SK-N-SH (cell line): ENCODE measurements at regions of chr1 and their contacts with region 1.

Region 1: GRCh38 chr1:27284425-27285273 is 37.3 kb upstream of the TMEM222 start:
- DNase-seq: peak; percentile 84
- H3K4me3 ChIP-seq: no peak overlapping the region; a peak in 1 of 4 replicates
- H3K27ac ChIP-seq: no peak overlapping the region
- H3K4me1 ChIP-seq: no peaks in the 10 kb centered on the region
- H3K27me3 ChIP-seq: no peaks in the 10 kb centered on the region
- CTCF ChIP-seq: peak; percentile 90
- EP300 ChIP-seq: no peak
- RAD21 ChIP-seq: peak; percentile 80

Region 2: GRCh38 chr1:27097484-27097917 is 187.1 kb before region 1 on chr1:
- CTCF ChIA-PET with region 1: interaction called, 149 read pairs
- POLR2A ChIA-PET with region 1: no interaction called
- DNase-seq: peak; percentile 91
- H3K4me3 ChIP-seq: peak overlapping the region in 1 of 2 experiments; percentile 36; a peak in 1 of 4 replicates
- H3K27ac ChIP-seq: no peak overlapping the region
- H3K4me1 ChIP-seq: peaks cover 15 to 19% of the 10 kb centered on the region in 2 experiments; a peak in 3 of 4 replicates
- H3K27me3 ChIP-seq: no peaks in the 10 kb centered on the region
- CTCF ChIP-seq: peak; percentile 97
- EP300 ChIP-seq: no peak
- RAD21 ChIP-seq: peak; percentile 96

Region 3: GRCh38 chr1:27111626-27112573 is 172.7 kb before region 1 on chr1:
- CTCF ChIA-PET with region 1: interaction called, 10 read pairs
- POLR2A ChIA-PET with region 1: no interaction called
- DNase-seq: peak; percentile 63
- H3K4me3 ChIP-seq: no peak overlapping the region
- H3K27ac ChIP-seq: peak overlapping the region; percentile 34 to 83
- H3K4me1 ChIP-seq: peaks cover 9 to 17% of the 10 kb centered on the region in 2 experiments; a peak in 3 of 4 replicates
- H3K27me3 ChIP-seq: no peaks in the 10 kb centered on the region
- CTCF ChIP-seq: peak; percentile 54
- EP300 ChIP-seq: peak in 1 of 2 experiments; percentile 47; a peak in 1 of 4 replicates
- RAD21 ChIP-seq: peak; percentile 70

Region 4: DNA sequence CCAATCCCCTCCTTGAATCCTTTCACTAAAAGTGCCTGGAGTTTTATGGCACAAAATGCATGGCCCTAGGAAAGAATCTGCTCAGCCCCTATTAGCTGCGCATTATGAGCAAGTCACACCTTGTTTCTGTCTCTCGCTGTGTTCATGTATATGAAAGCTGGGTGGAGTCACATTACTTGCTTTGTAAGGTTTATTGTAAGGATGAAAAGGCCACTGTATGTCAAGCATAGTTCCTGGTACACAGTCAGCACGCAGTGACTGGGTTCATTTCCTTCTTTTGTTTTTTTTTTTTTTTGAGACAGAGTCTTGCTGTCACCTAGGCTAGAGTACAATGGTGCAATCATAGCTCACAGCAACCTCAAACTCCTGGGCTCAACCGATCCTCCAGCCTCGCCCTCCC is 123.1 kb before region 1 on chr1:
- CTCF ChIA-PET with region 1: no interaction called
- POLR2A ChIA-PET with region 1: no interaction called
- DNase-seq: peak; percentile 1
- H3K4me3 ChIP-seq: no peak overlapping the region
- H3K27ac ChIP-seq: no peak overlapping the region
- H3K4me1 ChIP-seq: 0 out of 4 replicates have a peak, but pooled peaks cover 0 to under 1% of the 10 kb centered on the region in 2 experiments
- H3K27me3 ChIP-seq: no peaks in the 10 kb centered on the region
- CTCF ChIP-seq: no peak
- EP300 ChIP-seq: no peak
- RAD21 ChIP-seq: no peak

Region 5: GRCh38 chr1:27192039-27192529 is 92.6 kb before region 1 on chr1:
- CTCF ChIA-PET with region 1: interaction called, 30 read pairs
- POLR2A ChIA-PET with region 1: no interaction called
- DNase-seq: no peak
- H3K4me3 ChIP-seq: no peak overlapping the region
- H3K27ac ChIP-seq: no peak overlapping the region
- H3K4me1 ChIP-seq: no peaks in the 10 kb centered on the region
- H3K27me3 ChIP-seq: no peaks in the 10 kb centered on the region
- CTCF ChIP-seq: no peak
- EP300 ChIP-seq: no peak
- RAD21 ChIP-seq: no peak

Region 6: DNA sequence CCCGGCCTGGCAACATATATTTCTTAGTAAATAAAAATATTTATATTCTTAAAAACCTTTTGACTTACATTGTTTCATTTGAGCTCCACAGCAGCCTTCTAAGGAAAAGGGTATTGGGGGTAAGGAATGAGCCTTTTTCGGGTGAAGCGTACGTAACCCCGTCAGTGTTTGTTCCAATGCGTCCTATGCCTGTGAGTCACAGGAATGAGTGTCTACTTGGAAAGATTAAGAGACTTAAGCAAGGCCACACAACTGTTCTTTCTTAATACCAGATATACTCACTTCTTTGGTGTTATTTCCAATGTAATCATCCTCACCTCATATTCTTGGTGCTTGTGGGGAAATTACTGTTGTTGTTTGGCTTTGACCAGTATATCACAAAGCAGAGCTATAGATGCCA is 27.5 kb before region 1 on chr1:
- CTCF ChIA-PET with region 1: interaction called, 11 read pairs
- POLR2A ChIA-PET with region 1: no interaction called
- DNase-seq: no peak
- H3K4me3 ChIP-seq: no peak overlapping the region
- H3K27ac ChIP-seq: no peak overlapping the region
- H3K4me1 ChIP-seq: no peaks in the 10 kb centered on the region
- H3K27me3 ChIP-seq: no peaks in the 10 kb centered on the region
- CTCF ChIP-seq: no peak
- EP300 ChIP-seq: no peak
- RAD21 ChIP-seq: no peak

Region 7: DNA sequence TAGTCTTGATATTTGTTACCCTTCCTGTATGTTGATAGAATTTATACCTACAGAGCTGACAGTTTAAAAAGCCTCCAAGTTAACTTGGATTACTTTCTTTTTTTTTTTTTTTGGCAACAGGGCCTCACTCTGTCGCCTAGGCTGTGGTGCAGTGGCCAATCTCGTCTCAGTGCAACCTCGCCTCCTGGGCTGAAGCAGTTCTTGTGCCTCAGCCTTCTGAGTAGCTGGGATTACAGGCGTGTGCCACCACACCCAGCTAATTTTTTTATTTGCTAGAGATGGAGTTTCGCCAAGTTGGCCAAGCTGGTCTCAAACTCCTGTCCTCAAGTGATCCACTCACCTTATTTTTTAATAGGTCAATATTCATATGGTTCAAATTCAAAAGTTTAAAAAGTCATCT is 17.5 kb before region 1 on chr1:
- CTCF ChIA-PET with region 1: interaction called, 20 read pairs
- POLR2A ChIA-PET with region 1: no interaction called
- DNase-seq: no peak
- H3K4me3 ChIP-seq: no peak overlapping the region
- H3K27ac ChIP-seq: no peak overlapping the region
- H3K4me1 ChIP-seq: no peaks in the 10 kb centered on the region
- H3K27me3 ChIP-seq: no peaks in the 10 kb centered on the region
- CTCF ChIP-seq: no peak
- EP300 ChIP-seq: no peak
- RAD21 ChIP-seq: no peak